ENCODE measurements at regions of chr10 and their contacts with region 1.

Region 1: DNA sequence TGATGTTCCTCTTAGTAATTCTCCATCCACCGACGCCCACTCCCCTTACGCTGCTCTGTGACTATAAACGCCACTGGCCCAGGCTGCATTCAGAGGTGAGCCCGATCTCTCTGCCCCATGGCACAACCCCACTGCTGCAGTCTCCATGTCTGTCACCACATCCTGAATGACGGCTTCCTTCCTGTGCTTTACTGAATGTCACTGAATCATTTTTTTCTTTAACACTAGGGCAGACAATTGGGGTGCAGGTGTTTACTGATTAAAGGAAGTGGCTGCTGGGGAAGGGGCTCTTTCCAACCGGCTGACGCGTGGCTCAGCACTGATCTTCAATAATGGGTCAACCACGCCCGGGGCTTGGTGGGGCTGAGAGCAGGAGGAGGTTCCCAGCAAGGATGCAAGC is 208.3 kb downstream of the USP6NL start:
- DNase-seq: peak; percentile 81
- H3K4me3 Mint-ChIP-seq: peak overlapping the region; percentile 33
- H3K27ac Mint-ChIP-seq: peak overlapping the region; percentile 84
- H3K4me1 Mint-ChIP-seq: peaks cover 55% of the 10 kb centered on the region
- H3K27me3 Mint-ChIP-seq: no peaks in the 10 kb centered on the region

Region 2: DNA sequence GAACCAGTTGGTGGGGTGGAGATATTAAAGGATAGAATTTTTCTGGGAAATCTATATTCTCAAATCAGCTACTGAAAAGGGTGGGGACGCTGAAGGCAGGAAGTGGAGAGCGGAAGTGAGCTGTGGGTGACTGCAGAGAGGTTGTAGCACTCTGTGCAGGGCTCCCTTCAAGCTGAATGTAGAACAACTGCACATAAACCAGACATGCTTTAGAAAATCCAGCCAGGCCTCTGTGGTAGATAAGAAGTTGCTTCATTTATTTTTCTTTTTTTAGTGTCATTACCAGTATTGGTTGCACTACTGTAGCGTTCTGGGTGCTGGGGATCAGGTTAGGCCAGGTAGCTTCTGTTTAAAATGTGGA is 257.6 kb before region 1 on chr10:
- CTCF ChIA-PET with region 1: no interaction called
- POLR2A ChIA-PET with region 1: no interaction called
- intact Hi-C with region 1: loop called (anchors 2 kb)
- DNase-seq: peak; percentile 78
- H3K4me3 Mint-ChIP-seq: peak overlapping the region; percentile 64
- H3K27ac Mint-ChIP-seq: peak overlapping the region; percentile 93
- H3K4me1 Mint-ChIP-seq: peaks cover 86% of the 10 kb centered on the region
- H3K27me3 Mint-ChIP-seq: no peaks in the 10 kb centered on the region

Region 3: GRCh38 chr10:11285166-11285565 is 118.0 kb before region 1 on chr10:
- CTCF ChIA-PET with region 1: no interaction called
- POLR2A ChIA-PET with region 1: no interaction called
- intact Hi-C with region 1: no loop called
- DNase-seq: no peak
- H3K4me3 Mint-ChIP-seq: no peak overlapping the region
- H3K27ac Mint-ChIP-seq: no peak overlapping the region
- H3K4me1 Mint-ChIP-seq: peaks cover 27% of the 10 kb centered on the region
- H3K27me3 Mint-ChIP-seq: no peaks in the 10 kb centered on the region

Region 4: GRCh38 chr10:11322698-11323097 is 80.4 kb before region 1 on chr10:
- CTCF ChIA-PET with region 1: no interaction called
- POLR2A ChIA-PET with region 1: no interaction called
- intact Hi-C with region 1: loop called (anchors 2 kb)
- DNase-seq: no peak
- H3K4me3 Mint-ChIP-seq: no peak overlapping the region
- H3K27ac Mint-ChIP-seq: peak overlapping the region; percentile 83
- H3K4me1 Mint-ChIP-seq: peaks cover 69% of the 10 kb centered on the region
- H3K27me3 Mint-ChIP-seq: no peaks in the 10 kb centered on the region

Region 5: GRCh38 chr10:11440250-11441150 is 37.4 kb after region 1 on chr10:
- CTCF ChIA-PET with region 1: no interaction called
- POLR2A ChIA-PET with region 1: no interaction called
- intact Hi-C with region 1: loop called (anchors 2 kb)
- DNase-seq: peak; percentile 69
- H3K4me3 Mint-ChIP-seq: peak overlapping the region; percentile 65
- H3K27ac Mint-ChIP-seq: peak overlapping the region; percentile 88
- H3K4me1 Mint-ChIP-seq: peaks cover 29% of the 10 kb centered on the region
- H3K27me3 Mint-ChIP-seq: no peaks in the 10 kb centered on the region

Measured in activated CD4-positive, alpha-beta memory T cell treated with anti-CD3 and anti-CD28 coated beads for 36 hours (primary cell).